ENCODE measurements at regions of chr4 and their contacts with region 1.

Region 1: DNA sequence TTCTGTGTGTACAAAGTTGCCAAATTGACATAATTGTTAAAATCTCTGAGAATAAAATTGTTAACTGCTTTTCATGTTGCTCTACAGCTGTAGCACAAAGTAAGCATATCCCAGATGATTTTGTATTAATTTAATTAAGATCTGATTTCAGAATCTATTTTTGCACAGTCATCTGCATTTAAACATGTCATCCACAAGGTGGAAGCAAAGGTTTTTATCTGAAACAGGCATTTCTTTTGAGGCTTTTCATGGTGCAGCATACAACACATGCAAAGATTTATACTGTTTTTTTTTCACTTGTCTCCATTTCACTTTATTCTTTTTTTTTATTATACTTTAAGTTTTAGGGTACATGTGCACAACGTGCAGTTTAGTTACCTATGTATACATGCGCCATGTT is 51.2 kb downstream of the GC start:
- DNase-seq: no peak
- ATAC-seq: no peak

Region 2: GRCh38 chr4:71941001-71941400 is 208.3 kb after region 1 on chr4:
- intact Hi-C with region 1: loop called (anchors 10 kb)
- DNase-seq: no peak
- ATAC-seq: no peak

Measured in Right ventricle myocardium inferior (tissue), 1 donor.